ENCODE measurements at regions of chr6 and their contacts with region 1.

Region 1: GRCh38 chr6:122471107-122472021 is at the start of gene SERINC1:
- H3K4me3 ChIP-seq: peak within 1 kb of the TSS; percentile 66
- H3K27ac ChIP-seq: peak within 1 kb of the TSS; percentile 49
- H3K4me1 ChIP-seq: 0 out of 2 replicates have a peak, but pooled peaks cover 4% of the 10 kb centered on the region
- CTCF ChIP-seq: no peak

Region 2: GRCh38 chr6:122399384-122400158 is 71.8 kb before region 1 on chr6 and contains the start of gene HSF2:
- CTCF ChIA-PET with region 1: interaction called, 3 read pairs
- POLR2A ChIA-PET with region 1: interaction called, 10 read pairs
- H3K4me3 ChIP-seq: peak within 1 kb of the TSS; percentile 80
- H3K27ac ChIP-seq: peak within 1 kb of the TSS; percentile 96
- H3K4me1 ChIP-seq: peaks cover 23% of the 10 kb centered on the region
- CTCF ChIP-seq: peak; percentile 72

Region 3: GRCh38 chr6:122432816-122433215 is 38.5 kb before region 1 on chr6:
- CTCF ChIA-PET with region 1: no interaction called
- POLR2A ChIA-PET with region 1: no interaction called
- H3K4me3 ChIP-seq: no peak overlapping the region
- H3K27ac ChIP-seq: no peak overlapping the region
- H3K4me1 ChIP-seq: no peaks in the 10 kb centered on the region
- CTCF ChIP-seq: no peak

Region 4: GRCh38 chr6:122511193-122511924 is 40.0 kb after region 1 on chr6:
- CTCF ChIA-PET with region 1: no interaction called
- POLR2A ChIA-PET with region 1: no interaction called
- H3K4me3 ChIP-seq: no peak overlapping the region
- H3K27ac ChIP-seq: no peak overlapping the region
- H3K4me1 ChIP-seq: no peaks in the 10 kb centered on the region
- CTCF ChIP-seq: no peak